ENCODE measurements at regions of chr16 and their contacts with region 1.

Region 1: DNA sequence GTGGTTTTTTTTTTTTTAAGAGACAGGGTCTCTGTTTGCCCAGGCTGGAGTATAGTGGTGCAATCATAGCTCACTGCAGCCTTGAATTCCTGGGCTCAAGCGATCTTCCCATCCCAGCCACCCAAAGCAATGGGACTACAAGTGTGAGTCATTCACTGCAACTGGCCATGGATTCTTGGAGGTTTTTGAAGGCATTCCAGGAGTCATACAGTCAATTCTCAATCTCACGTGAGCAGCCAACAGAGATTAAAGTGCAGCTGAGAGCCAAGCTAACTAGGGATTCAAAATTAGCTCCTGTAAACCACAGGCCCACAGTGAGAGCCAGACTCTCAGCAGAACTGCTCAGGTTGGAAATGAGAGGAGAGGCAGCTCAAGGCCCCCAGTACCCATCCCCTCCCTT is 30.2 kb downstream of the XPO6 start:
- DNase-seq: peak; percentile 97
- ATAC-seq: peak; percentile 82
- H3K4me3 ChIP-seq: no peak overlapping the region
- H3K27ac ChIP-seq: peak overlapping the region; percentile 86
- H3K4me1 ChIP-seq: peaks cover 31% of the 10 kb centered on the region
- H3K27me3 ChIP-seq: no peaks in the 10 kb centered on the region
- CTCF ChIP-seq: no peak
- POLR2A ChIP-seq: no peak
- RAD21 ChIP-seq: no peak

Region 2: GRCh38 chr16:27972500-27972899 is 209.0 kb before region 1 on chr16:
- CTCF ChIA-PET with region 1: no interaction called
- POLR2A ChIA-PET with region 1: no interaction called
- dilution Hi-C with region 1: no loop called
- in situ Hi-C with region 1: no loop called
- intact Hi-C with region 1: no loop called
- DNase-seq: peak; percentile 30
- ATAC-seq: no peak
- H3K4me3 ChIP-seq: no peak overlapping the region
- H3K27ac ChIP-seq: no peak overlapping the region
- H3K4me1 ChIP-seq: no peaks in the 10 kb centered on the region
- H3K27me3 ChIP-seq: peaks cover 8% of the 10 kb centered on the region
- CTCF ChIP-seq: peak; percentile 46
- POLR2A ChIP-seq: no peak
- RAD21 ChIP-seq: peak; percentile 47

Region 3: DNA sequence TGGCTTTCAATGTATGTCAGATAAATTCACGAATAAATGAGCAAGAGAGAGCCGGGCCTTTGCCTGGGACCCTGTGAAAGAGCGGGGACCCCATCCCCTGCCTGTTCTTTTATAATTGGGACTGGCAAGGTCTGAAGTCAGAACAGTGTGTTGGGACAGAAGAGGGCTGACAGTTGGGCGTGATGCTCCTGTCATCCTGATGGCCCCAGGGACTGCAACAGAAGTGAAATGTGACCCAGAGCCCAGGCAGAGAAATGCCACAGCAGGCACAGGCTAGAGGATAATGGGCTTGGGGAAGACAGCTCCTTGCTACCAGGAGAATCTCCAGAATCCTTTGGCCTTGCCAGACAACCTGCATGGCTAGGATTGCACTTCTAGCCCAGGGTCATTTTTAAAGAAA is 155.9 kb before region 1 on chr16:
- CTCF ChIA-PET with region 1: no interaction called
- POLR2A ChIA-PET with region 1: no interaction called
- dilution Hi-C with region 1: no loop called
- in situ Hi-C with region 1: no loop called
- intact Hi-C with region 1: no loop called
- DNase-seq: no peak
- ATAC-seq: no peak
- H3K4me3 ChIP-seq: no peak overlapping the region
- H3K27ac ChIP-seq: no peak overlapping the region
- H3K4me1 ChIP-seq: no peaks in the 10 kb centered on the region
- H3K27me3 ChIP-seq: peaks cover 2% of the 10 kb centered on the region; the same call in 1 of the 2 replicates
- CTCF ChIP-seq: no peak
- POLR2A ChIP-seq: no peak
- RAD21 ChIP-seq: no peak

Region 4: DNA sequence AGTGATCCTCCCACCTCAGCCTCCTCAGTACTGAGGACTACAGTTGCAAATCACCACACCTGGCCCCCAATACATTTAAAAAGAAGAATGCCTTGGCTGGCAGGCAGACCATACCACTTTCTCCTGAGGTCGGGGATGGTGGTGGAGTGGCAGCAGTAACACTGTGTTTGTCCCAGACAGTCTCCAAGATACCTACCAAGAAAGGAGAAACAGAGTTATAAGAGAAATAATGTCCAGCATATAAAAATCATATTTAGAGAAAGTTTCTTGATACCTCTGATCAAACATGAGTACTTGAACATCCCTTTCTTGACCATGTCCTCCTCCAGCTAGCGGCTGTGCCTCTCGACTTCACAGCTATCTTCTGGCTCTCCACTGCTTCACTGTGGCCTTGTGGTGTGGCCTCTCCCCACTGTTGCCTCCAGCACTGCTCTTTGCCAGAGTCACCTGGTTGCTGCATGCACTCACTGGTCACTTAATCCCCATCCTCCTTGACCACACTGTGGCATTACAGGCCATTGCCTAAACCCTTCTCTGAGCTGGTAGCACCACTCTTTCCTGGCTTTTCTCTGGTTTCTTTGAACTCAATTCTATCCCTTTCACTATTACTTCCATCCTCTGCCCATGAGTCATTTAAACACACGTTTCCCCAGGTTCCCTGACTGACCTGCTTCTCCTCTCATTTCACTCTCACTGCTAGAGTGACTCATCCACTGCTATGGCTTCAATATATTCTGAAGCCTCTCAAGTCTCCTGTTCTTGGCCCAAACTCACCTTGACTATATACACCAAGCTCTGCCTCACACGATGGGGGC is 14.9 kb before region 1 on chr16:
- CTCF ChIA-PET with region 1: interaction called, 3 read pairs
- POLR2A ChIA-PET with region 1: no interaction called
- dilution Hi-C with region 1: no loop called
- in situ Hi-C with region 1: no loop called
- intact Hi-C with region 1: loop called (anchors 2 kb)
- DNase-seq: peak; percentile 81
- ATAC-seq: peak; percentile 22; the same call in 1 of the 2 replicates
- H3K4me3 ChIP-seq: no peak overlapping the region
- H3K27ac ChIP-seq: peak overlapping the region; percentile 15; the same call in 1 of the 2 replicates
- H3K4me1 ChIP-seq: peaks cover 9% of the 10 kb centered on the region
- H3K27me3 ChIP-seq: no peaks in the 10 kb centered on the region
- CTCF ChIP-seq: no peak
- POLR2A ChIP-seq: no peak
- RAD21 ChIP-seq: no peak

Region 5: GRCh38 chr16:28193530-28194423 is 12.3 kb after region 1 on chr16:
- CTCF ChIA-PET with region 1: interaction called, 11 read pairs
- POLR2A ChIA-PET with region 1: interaction called, 11 read pairs
- dilution Hi-C with region 1: no loop called
- in situ Hi-C with region 1: no loop called
- intact Hi-C with region 1: no loop called
- DNase-seq: peak; percentile 98
- ATAC-seq: peak; percentile 74
- H3K4me3 ChIP-seq: no peak overlapping the region
- H3K27ac ChIP-seq: peak overlapping the region; percentile 100
- H3K4me1 ChIP-seq: peaks cover 45% of the 10 kb centered on the region
- H3K27me3 ChIP-seq: no peaks in the 10 kb centered on the region
- CTCF ChIP-seq: no peak
- POLR2A ChIP-seq: no peak
- RAD21 ChIP-seq: no peak

Region 6: DNA sequence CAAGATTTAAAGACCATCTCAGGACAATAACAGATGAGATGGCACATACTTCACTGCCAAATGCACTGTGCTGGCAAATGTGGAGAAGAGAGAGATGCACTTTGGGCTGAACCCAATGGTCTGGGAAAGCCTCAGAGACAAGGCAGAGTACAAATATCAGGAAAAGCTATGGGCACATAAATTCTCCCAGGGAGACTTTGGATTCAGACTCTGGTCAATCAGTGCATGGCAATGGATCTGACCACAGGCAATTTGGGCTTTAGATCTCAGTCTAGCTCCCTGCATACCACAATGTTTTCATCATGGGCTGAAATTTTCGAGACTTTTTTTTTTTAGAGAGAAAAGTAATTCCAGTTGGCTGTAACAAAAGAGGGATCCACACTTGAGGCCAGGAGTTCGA is 50.2 kb after region 1 on chr16:
- CTCF ChIA-PET with region 1: no interaction called
- POLR2A ChIA-PET with region 1: no interaction called
- dilution Hi-C with region 1: no loop called
- in situ Hi-C with region 1: no loop called
- intact Hi-C with region 1: no loop called
- DNase-seq: no peak
- ATAC-seq: no peak
- H3K4me3 ChIP-seq: no peak overlapping the region
- H3K27ac ChIP-seq: no peak overlapping the region
- H3K4me1 ChIP-seq: no peaks in the 10 kb centered on the region
- H3K27me3 ChIP-seq: no peaks in the 10 kb centered on the region
- CTCF ChIP-seq: no peak
- POLR2A ChIP-seq: no peak
- RAD21 ChIP-seq: no peak

Region 7: DNA sequence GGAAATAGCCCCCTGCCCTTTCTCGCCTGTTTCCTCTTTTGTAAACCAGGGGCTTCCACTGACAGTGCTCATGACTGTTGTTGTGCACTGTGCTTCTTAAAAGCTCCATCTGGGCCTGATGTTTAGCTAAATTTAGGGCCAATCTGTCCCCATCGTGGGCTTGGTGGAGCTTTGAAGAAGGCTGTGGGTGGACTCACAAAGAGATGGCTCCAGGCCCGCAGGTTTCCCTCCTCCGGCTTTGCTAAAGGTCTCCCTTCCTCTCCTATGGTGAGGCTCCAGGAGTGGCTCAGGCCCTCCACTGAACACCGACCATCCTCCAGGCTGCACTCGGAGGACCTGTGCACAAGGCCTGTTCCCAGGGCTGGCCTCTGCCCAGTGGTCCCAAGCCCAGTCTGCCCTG is 60.4 kb after region 1 on chr16:
- CTCF ChIA-PET with region 1: no interaction called
- POLR2A ChIA-PET with region 1: interaction called, 10 read pairs
- dilution Hi-C with region 1: no loop called
- in situ Hi-C with region 1: no loop called
- intact Hi-C with region 1: no loop called
- DNase-seq: no peak
- ATAC-seq: no peak
- H3K4me3 ChIP-seq: no peak overlapping the region
- H3K27ac ChIP-seq: no peak overlapping the region
- H3K4me1 ChIP-seq: no peaks in the 10 kb centered on the region
- H3K27me3 ChIP-seq: peaks cover 6% of the 10 kb centered on the region
- CTCF ChIP-seq: no peak
- POLR2A ChIP-seq: no peak
- RAD21 ChIP-seq: no peak

Measured in IMR-90 (cell line).